CD8-positive, alpha-beta T cell (primary cell): ENCODE measurements at regions of chr9 and their contacts with region 1.

Region 1: GRCh38 chr9:4662108-4662988 is at the start of gene PLPP6:
- DNase-seq: peak; percentile 49 to 92 (median 78)
- ATAC-seq: peak; percentile 78
- H3K4me3 ChIP-seq: peak within 1 kb of the TSS; percentile 74 to 88
- H3K4me3 Mint-ChIP-seq: peak within 1 kb of the TSS; percentile 98
- H3K27ac ChIP-seq: peak within 1 kb of the TSS; percentile 67 to 70
- H3K27ac Mint-ChIP-seq: peak within 1 kb of the TSS; percentile 98
- H3K4me1 ChIP-seq: peaks cover 54% of the 10 kb centered on the region
- H3K4me1 Mint-ChIP-seq: peaks cover 66% of the 10 kb centered on the region
- H3K27me3 ChIP-seq: no peaks in the 10 kb centered on the region
- H3K27me3 Mint-ChIP-seq: no peaks in the 10 kb centered on the region
- CTCF ChIP-seq: peak; percentile 59
- total RNA-seq, gene PLPP6: 4.4 TPM

Region 2: DNA sequence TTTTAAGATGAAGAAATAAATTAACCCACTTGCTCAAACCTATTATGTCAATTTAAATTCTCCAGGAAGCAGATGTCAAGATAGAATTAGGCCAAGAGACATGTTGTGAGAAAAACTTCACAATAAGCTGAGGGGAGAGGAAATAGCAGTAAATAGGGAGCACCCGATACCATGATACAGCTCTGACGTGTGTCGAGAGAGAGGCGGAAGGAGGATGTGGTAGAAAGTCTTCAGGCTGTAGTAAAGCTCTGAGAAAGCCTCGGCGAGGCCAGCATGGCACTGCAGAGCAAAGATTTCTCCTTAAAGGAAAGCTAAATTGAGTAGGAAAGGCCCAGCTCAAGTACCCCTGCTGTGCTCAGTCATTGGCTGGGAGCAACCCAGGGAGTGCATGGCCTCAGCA is 1812.4 kb before region 1 on chr9:
- CTCF ChIA-PET with region 1: no interaction called
- POLR2A ChIA-PET with region 1: no interaction called
- intact Hi-C with region 1: loop called in 1 of 2 experiments (anchors 10 kb)
- DNase-seq: peak in 2 of 9 experiments; percentile 11 to 42
- ATAC-seq: peak; percentile 59
- H3K4me3 ChIP-seq: no peak overlapping the region
- H3K4me3 Mint-ChIP-seq: no peak overlapping the region
- H3K27ac ChIP-seq: no peak overlapping the region
- H3K27ac Mint-ChIP-seq: no peak overlapping the region
- H3K4me1 ChIP-seq: peaks cover 8% of the 10 kb centered on the region
- H3K4me1 Mint-ChIP-seq: peaks cover 11% of the 10 kb centered on the region
- H3K27me3 ChIP-seq: no peaks in the 10 kb centered on the region
- H3K27me3 Mint-ChIP-seq: peaks cover 14% of the 10 kb centered on the region
- CTCF ChIP-seq: no peak

Region 3: GRCh38 chr9:4689687-4690104 is 27.3 kb after region 1 on chr9:
- CTCF ChIA-PET with region 1: interaction called, 3 read pairs
- POLR2A ChIA-PET with region 1: no interaction called
- intact Hi-C with region 1: loop called in 1 of 2 experiments (anchors 5 kb)
- DNase-seq: no peak
- ATAC-seq: no peak
- H3K4me3 ChIP-seq: no peak overlapping the region
- H3K4me3 Mint-ChIP-seq: no peak overlapping the region
- H3K27ac ChIP-seq: no peak overlapping the region
- H3K27ac Mint-ChIP-seq: peak overlapping the region; percentile 58
- H3K4me1 ChIP-seq: no peaks in the 10 kb centered on the region
- H3K4me1 Mint-ChIP-seq: peaks cover 53% of the 10 kb centered on the region
- H3K27me3 ChIP-seq: no peaks in the 10 kb centered on the region
- H3K27me3 Mint-ChIP-seq: no peaks in the 10 kb centered on the region
- CTCF ChIP-seq: no peak

Region 4: DNA sequence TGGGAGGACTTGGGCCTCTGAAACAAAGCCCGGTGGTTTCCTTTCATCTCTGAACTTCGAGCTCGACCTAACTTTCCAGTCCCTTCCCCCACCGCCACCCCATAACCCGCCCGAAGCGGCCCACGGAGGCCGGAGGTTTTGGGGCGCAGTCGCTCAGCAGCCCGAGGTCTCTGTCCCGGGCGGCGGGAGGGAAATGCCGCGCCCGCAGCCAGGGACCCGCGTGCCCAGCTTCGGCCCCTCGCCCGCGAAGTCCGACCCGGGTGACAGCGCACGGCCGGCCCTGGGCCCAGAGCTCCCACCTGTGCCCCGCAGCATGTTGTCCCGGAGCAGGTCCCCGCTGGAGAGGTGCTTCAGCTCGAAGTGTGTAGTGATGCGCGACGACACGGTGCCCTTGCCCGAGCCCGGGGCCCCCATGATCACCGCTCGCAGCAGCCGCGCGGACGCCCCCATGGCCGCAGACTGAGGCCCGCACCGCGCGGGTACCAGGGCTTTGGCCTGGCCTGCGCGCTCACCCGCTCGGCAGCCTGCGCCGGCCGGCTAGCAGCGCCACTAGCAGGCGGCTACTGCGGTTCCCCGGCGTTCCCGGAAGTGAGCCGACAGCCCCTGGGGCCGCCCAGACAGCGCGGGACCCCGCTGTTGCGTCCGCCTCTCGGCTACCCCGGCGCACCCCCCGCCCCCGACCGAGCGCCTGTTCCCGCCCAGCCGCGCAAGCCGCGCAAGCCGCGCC is 78.5 kb after region 1 on chr9 and contains the start of gene AK3:
- CTCF ChIA-PET with region 1: interaction called, 5 read pairs
- POLR2A ChIA-PET with region 1: interaction called, 8 read pairs
- intact Hi-C with region 1: loop called (anchors 1 to 5 kb)
- DNase-seq: peak; percentile 71 to 94 (median 86)
- ATAC-seq: peak; percentile 93
- H3K4me3 ChIP-seq: peak within 1 kb of the TSS; percentile 76 to 97
- H3K4me3 Mint-ChIP-seq: peak within 1 kb of the TSS; percentile 87
- H3K27ac ChIP-seq: peak within 1 kb of the TSS; percentile 70 to 86
- H3K27ac Mint-ChIP-seq: peak within 1 kb of the TSS; percentile 96
- H3K4me1 ChIP-seq: peaks cover 30% of the 10 kb centered on the region
- H3K4me1 Mint-ChIP-seq: peaks cover 37% of the 10 kb centered on the region
- H3K27me3 ChIP-seq: no peaks in the 10 kb centered on the region
- H3K27me3 Mint-ChIP-seq: no peaks in the 10 kb centered on the region
- CTCF ChIP-seq: no peak
- total RNA-seq, gene AK3: 15.2 to 18.8 TPM

Region 5: DNA sequence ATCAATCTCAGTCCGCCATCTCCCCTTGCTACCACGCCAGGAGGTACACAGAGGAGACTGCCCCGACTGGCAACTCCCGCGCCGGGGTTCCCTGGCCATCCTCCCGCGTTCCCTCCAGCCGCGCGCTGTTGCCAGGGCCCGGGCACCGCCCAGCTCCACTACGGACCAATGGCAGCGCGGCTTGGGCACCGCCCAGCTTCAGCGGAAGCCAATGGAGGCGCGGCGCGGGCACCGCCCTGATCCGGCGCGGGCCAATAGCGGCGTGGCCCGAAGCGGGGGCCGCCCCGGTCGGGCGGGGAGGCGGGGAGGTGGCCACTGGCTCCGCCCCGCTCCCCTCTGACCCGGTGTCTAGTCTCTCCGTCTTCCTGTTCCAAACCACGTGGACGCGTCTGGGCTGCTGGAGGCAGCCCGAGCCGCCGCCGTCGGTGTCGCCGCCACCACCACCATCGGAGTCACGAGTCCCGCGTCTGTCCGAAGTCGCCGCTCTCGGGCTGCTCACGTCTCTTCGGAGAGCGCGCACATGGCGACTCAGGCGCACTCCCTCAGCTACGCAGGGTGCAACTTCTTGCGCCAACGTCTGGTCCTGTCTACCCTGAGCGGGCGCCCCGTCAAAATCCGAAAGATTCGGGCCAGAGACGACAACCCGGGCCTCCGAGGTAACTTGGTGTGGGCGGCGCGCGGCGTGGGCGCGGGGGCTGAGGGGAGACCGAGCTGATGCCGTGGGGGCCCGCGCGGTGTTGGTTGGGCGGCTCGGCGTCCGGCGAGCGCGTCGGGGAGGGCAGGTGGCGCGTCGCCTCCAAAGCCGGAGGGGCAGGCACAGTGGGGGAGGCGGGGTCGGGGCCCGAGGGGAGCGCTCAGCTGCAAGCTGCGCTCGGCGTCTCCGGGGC is 130.5 kb after region 1 on chr9 and contains the start of gene RCL1:
- CTCF ChIA-PET with region 1: no interaction called
- POLR2A ChIA-PET with region 1: interaction called, 4 read pairs
- intact Hi-C with region 1: loop called in 1 of 2 experiments (anchors 5 kb)
- DNase-seq: peak; percentile 92 to 98 (median 95)
- ATAC-seq: peak; percentile 90
- H3K4me3 ChIP-seq: peak within 1 kb of the TSS; percentile 92 to 98
- H3K4me3 Mint-ChIP-seq: peak within 1 kb of the TSS; percentile 95
- H3K27ac ChIP-seq: peak within 1 kb of the TSS; percentile 90 to 92
- H3K27ac Mint-ChIP-seq: peak within 1 kb of the TSS; percentile 96
- H3K4me1 ChIP-seq: peaks cover 30% of the 10 kb centered on the region
- H3K4me1 Mint-ChIP-seq: peaks cover 47% of the 10 kb centered on the region
- H3K27me3 ChIP-seq: no peaks in the 10 kb centered on the region
- H3K27me3 Mint-ChIP-seq: no peaks in the 10 kb centered on the region
- CTCF ChIP-seq: no peak
- total RNA-seq, gene RCL1: 30.8 to 35.0 TPM